Cardiac septum (tissue), 1 donor: ENCODE measurements at regions of chr7 and their contacts with region 1.

Region 1: DNA sequence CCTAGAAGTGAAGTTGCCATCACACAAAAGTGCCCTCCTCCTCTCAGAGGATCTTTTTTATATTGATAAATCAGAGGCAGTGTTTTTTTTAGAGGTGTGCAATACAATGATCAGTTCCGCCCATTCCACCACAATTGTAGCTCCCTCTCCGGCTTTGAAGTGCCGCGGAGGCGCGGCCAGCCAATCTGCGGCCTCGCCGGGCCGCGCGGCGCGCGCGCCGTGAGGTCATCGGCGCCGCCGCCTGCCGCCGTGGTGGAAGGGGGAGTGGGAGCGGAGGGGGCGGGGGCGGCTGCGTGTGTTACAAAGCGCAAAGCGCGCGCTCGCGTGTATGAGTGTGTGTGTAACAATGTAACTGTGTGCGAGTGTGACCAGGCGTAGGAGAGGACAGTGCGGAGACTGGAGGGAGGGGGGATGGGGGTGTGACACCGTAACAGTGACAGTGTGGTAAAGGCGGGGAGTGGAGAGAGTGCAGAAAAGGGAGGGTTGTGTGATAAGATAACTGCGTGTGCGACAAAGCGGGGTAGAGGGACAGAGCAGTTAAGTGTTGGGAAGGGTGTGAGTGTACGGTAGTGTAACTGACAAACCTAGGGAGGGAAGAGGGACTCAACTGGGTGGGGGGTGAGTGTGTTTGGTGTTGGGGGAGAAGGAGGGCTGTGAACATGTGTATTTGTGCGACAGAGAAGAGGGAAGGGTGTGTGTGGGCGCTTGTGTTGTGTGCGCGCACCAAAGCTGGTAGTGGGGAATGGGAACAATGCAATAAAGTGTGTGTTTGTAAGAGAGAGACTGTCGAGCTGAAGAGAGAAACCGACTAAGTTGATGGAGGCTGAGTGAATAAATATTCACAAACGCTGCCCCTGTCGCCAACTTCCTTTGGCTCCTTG is at the start of gene SP8:
- DNase-seq: no peak
- total RNA-seq, gene SP8: not detected

Region 2: DNA sequence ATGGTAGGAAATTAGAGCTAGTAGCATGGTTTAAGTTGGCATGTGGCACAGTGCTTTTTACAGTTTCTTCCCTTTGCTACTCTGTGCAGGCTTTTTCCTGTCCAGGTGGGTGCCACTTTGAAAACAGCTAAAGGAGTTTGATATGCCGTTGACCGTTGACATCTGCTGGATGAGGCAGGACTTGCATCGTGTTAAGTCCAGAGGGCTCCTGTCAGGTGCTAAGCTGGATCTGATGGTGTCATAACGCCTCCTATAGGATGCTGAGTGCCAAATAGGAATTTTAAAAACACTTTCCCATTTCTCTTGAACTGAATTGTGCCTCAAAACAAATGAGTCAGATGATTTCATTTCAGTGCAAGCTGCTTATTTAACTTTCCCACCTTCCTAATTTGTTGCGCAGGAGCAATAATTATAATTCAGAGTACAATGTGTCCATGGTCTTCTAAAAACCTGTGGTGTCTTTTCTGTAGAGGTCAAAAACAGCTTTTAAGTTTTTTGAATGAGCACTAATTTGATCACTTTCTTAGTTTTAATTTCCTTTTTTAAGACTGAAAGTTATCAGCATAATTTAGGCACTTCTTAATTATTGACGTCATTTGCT is 980.4 kb after region 1 on chr7:
- intact Hi-C with region 1: loop called (anchors 10 kb)
- DNase-seq: no peak